Transverse colon (tissue), 4 donors: ENCODE measurements at regions of chr2 and their contacts with region 1.

Region 1: DNA sequence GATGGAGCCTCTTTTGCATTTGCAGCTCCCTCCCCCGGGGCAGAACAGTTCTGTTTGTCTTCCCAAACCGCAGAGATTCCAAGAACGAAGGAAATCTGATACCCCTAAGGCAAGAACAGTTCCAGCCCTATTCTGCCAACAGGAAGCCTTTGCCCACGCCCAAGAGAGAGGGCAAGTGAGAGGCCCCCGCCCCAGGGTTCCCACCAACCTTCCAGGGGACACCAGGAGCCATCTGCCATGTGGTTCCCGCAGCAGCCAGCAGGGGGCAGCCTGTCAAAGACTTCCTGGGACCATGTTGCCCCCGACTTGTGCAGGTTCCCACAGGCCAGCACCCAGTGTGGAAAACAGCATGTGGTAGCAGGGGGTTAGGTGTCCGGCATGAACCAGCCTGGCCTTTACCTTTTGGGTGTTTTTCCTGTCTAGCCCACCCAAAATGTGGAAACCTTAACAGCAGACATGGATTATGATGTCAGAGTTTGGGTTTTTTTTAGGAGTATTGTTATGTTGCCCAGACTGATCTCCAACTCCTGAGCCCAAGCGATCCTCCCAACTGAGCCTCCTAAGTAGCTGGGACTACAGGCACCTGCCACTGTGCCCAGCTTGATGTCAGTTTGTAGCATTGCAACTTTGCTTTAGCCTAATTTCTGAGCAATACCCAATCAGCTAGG is 21.7 kb upstream of the EFHD1 start:
- DNase-seq: peak; percentile 66
- H3K4me3 ChIP-seq: no peak overlapping the region
- H3K27ac ChIP-seq: no peak overlapping the region
- H3K4me1 ChIP-seq: no peaks in the 10 kb centered on the region
- H3K27me3 ChIP-seq: no peaks in the 10 kb centered on the region
- CTCF ChIP-seq: peak; percentile 64 to 87 (median 76)
- EP300 ChIP-seq: no peak
- POLR2A ChIP-seq: no peak

Region 2: GRCh38 chr2:233251306-233252116 is 639.8 kb after region 1 on chr2 and contains the start of gene ATG16L1:
- in situ Hi-C with region 1: loop called in 2 of 4 experiments (anchors 25 kb)
- intact Hi-C with region 1: loop called (anchors 10 kb)
- DNase-seq: peak; percentile 97
- H3K4me3 ChIP-seq: peak within 1 kb of the TSS; percentile 85 to 97 (median 94)
- H3K27ac ChIP-seq: peak within 1 kb of the TSS; percentile 91 to 98 (median 93)
- H3K4me1 ChIP-seq: peaks cover 4 to 40% (median 16%) of the 10 kb centered on the region in 4 donors
- H3K27me3 ChIP-seq: no peaks in the 10 kb centered on the region
- CTCF ChIP-seq: peak; percentile 84 to 97 (median 91)
- EP300 ChIP-seq: peak; percentile 61
- POLR2A ChIP-seq: peak; percentile 87
- total RNA-seq, gene ATG16L1: 10.1 to 101 (median 50.3) TPM